K562 (cell line): ENCODE measurements at regions of chr11 and their contacts with region 1.

Region 1: DNA sequence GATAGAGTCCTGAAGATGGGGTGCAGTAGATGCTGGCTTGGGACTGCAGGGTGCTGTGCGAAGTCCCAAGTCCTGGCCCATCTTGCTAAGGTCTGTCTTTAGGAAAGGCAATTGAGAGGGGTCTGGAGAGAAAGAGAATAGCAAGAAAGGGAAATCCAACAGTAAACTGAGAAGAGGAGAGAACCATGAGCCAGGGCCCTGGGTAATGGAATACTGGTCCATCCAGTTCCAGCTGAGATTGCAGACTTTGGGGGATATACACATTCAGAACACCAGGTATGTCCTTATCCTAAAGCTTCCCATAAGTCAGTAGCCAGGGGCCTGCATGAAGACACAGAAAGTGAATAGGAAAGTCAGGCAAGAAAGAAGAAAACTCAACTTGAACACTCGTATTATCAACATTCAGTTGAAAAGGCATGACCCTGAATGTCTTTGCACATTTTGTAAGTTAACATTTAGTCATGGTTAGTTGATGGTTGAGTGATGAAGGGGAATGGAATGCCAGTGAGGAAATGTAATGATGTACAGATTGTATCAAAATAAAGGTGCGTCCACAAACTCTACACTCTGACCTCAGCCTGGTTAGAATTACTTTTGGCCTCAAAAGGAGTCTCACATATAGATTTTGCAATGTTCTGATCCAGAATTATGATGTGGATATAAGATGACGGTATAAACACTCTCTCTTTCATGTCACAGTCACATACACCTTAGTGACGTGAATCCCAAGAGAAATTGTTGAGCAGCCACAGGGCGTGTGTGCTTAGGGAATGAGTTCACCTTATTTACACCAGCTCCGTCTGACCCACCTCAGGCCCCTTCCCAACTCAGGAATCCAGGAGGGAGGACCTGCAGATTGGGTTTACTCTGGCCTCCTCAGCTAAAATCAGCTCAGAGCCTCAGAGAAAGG is 100.3 kb downstream of the RDX start:
- DNase-seq: no peak
- ATAC-seq: no peak
- H3K4me3 ChIP-seq: no peak overlapping the region
- H3K27ac ChIP-seq: no peak overlapping the region
- H3K4me1 ChIP-seq: no peaks in the 10 kb centered on the region; a peak in 1 of 5 replicates
- H3K27me3 ChIP-seq: no peaks in the 10 kb centered on the region
- CTCF ChIP-seq: no peak
- EP300 ChIP-seq: no peak
- POLR2A ChIP-seq: no peak
- RAD21 ChIP-seq: no peak

Region 2: GRCh38 chr11:109946322-109946846 is 249.7 kb before region 1 on chr11:
- CTCF ChIA-PET with region 1: interaction called, 4 read pairs
- POLR2A ChIA-PET with region 1: no interaction called
- in situ Hi-C with region 1: no loop called
- intact Hi-C with region 1: loop called (anchors 2 kb)
- DNase-seq: peak; percentile 59 to 87 (median 66)
- ATAC-seq: peak; percentile 99
- H3K4me3 ChIP-seq: no peak overlapping the region
- H3K27ac ChIP-seq: peak overlapping the region; percentile 43; the same call in 2 of the 3 replicates
- H3K4me1 ChIP-seq: no peaks in the 10 kb centered on the region; a peak in 1 of 5 replicates
- H3K27me3 ChIP-seq: no peaks in the 10 kb centered on the region
- CTCF ChIP-seq: peak; percentile 80 to 94 (median 90)
- EP300 ChIP-seq: peak; percentile 51
- POLR2A ChIP-seq: no peak
- RAD21 ChIP-seq: peak; percentile 95 to 96

Region 3: GRCh38 chr11:110362971-110363509 is 166.9 kb after region 1 on chr11:
- CTCF ChIA-PET with region 1: interaction called, 11 read pairs
- POLR2A ChIA-PET with region 1: no interaction called
- in situ Hi-C with region 1: loop called (anchors 5 kb)
- intact Hi-C with region 1: loop called (anchors 1 kb)
- DNase-seq: no peak
- ATAC-seq: no peak; the same call in none of the 3 replicates
- H3K4me3 ChIP-seq: no peak overlapping the region
- H3K27ac ChIP-seq: no peak overlapping the region
- H3K4me1 ChIP-seq: no peaks in the 10 kb centered on the region
- H3K27me3 ChIP-seq: no peaks in the 10 kb centered on the region; a peak in 1 of 5 replicates
- CTCF ChIP-seq: no peak
- EP300 ChIP-seq: no peak
- POLR2A ChIP-seq: no peak
- RAD21 ChIP-seq: no peak

Region 4: GRCh38 chr11:110429731-110430266 is 233.7 kb after region 1 on chr11 and contains the start of gene FDX1:
- CTCF ChIA-PET with region 1: interaction called, 16 read pairs
- POLR2A ChIA-PET with region 1: interaction called, 4 read pairs
- in situ Hi-C with region 1: loop called (anchors 10 kb)
- intact Hi-C with region 1: loop called (anchors 1 kb)
- DNase-seq: peak; percentile 90 to 95 (median 92)
- ATAC-seq: peak; percentile 94
- H3K4me3 ChIP-seq: peak within 1 kb of the TSS; percentile 70
- H3K27ac ChIP-seq: peak within 1 kb of the TSS; percentile 81
- H3K4me1 ChIP-seq: peaks cover 11 to 13% of the 10 kb centered on the region in 2 experiments; a peak in 4 of 5 replicates
- H3K27me3 ChIP-seq: no peaks in the 10 kb centered on the region
- CTCF ChIP-seq: peak; percentile 47 to 74 (median 53); a peak in 5 of 6 replicates
- EP300 ChIP-seq: no peak
- POLR2A ChIP-seq: peak; percentile 64; the same call in 1 of the 2 replicates
- RAD21 ChIP-seq: peak; percentile 20 to 34; a peak in 1 of 4 replicates
- polyA plus RNA-seq, gene FDX1: 6.4 to 6.9 TPM

Region 5: DNA sequence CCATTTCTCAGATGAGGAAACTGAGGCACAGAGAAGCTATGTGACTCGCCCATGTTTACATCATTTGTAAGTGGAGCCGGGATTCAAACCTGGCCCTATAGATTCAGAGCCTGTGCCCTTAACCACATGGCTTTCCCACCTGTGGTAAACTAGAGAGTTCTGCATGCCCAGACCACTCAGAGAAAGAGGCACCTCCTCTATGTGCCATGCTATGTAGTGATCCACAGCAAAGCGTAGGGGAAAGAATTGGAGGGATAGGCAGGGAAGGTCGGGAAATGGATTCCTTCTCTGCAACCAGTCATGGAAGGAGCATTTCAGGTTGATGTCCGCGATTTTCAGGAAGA is 1034.0 kb after region 1 on chr11:
- CTCF ChIA-PET with region 1: no interaction called
- POLR2A ChIA-PET with region 1: no interaction called
- in situ Hi-C with region 1: loop called (anchors 25 kb)
- intact Hi-C with region 1: loop called (anchors 2 kb)
- DNase-seq: no peak
- ATAC-seq: peak; percentile 62
- H3K4me3 ChIP-seq: no peak overlapping the region
- H3K27ac ChIP-seq: no peak overlapping the region
- H3K4me1 ChIP-seq: no peaks in the 10 kb centered on the region; a peak in 1 of 5 replicates
- H3K27me3 ChIP-seq: no peaks in the 10 kb centered on the region
- CTCF ChIP-seq: no peak
- EP300 ChIP-seq: no peak
- POLR2A ChIP-seq: no peak
- RAD21 ChIP-seq: no peak